ENCODE measurements at regions of chr19 and their contacts with region 1.

Region 1: DNA sequence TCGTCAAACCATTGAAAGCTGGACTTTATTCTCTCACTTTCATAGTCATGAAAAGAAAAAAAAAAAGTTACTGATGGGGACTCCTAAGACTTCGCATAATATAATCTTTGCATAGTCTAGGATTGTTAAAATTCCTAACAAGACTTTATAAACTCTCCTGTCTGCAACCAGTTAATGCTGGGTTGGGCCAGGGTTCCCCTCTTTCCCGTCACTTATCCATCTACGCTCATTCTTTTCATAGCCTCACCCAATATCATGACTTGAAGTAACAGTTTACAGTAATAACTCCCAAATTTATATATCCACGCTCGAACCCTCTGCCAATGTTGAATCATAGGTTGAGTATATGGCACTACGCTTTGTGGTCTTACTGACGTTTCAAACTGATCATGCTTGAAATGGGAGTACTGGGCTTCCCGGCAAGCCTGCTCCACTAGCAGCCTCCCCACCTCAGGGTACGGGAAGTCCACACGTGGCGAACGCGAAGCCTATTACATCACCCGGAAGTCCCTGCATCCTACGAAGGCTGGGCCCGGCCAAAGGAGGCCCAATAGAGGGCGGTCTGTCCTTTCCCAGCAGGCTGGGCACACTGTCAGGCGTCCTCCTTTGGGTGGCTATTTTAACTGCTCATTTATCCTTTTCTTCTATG is 743 bp upstream of the ZNF460 start:
- DNase-seq: peak; percentile 85 to 94 (median 88)
- H3K4me3 ChIP-seq: peak overlapping the region; percentile 80 to 87 (median 85)
- H3K4me3 Mint-ChIP-seq: no peak overlapping the region
- H3K27ac ChIP-seq: peak overlapping the region; percentile 95
- H3K27ac Mint-ChIP-seq: no peak overlapping the region
- H3K4me1 ChIP-seq: peaks cover 18 to 26% of the 10 kb centered on the region in 2 donors
- H3K4me1 Mint-ChIP-seq: peaks cover 18% of the 10 kb centered on the region
- H3K27me3 ChIP-seq: no peaks in the 10 kb centered on the region
- H3K27me3 Mint-ChIP-seq: peaks cover 0 to 3% (median 0%) of the 10 kb centered on the region in 3 donors
- CTCF ChIP-seq: no peak

Region 2: GRCh38 chr19:57240311-57241090 is 39.0 kb before region 1 on chr19 and contains the start of gene ZNF805:
- intact Hi-C with region 1: loop called (anchors 1 to 5 kb)
- DNase-seq: peak; percentile 84 to 90 (median 86)
- H3K4me3 ChIP-seq: peak within 1 kb of the TSS; percentile 78 to 94 (median 81)
- H3K4me3 Mint-ChIP-seq: peak within 1 kb of the TSS; percentile 88 to 94
- H3K27ac ChIP-seq: peak within 1 kb of the TSS; percentile 72 to 92
- H3K27ac Mint-ChIP-seq: peak within 1 kb of the TSS; percentile 86 to 96 (median 93)
- H3K4me1 ChIP-seq: peaks cover 17 to 23% of the 10 kb centered on the region in 2 donors
- H3K4me1 Mint-ChIP-seq: peaks cover 21% of the 10 kb centered on the region
- H3K27me3 ChIP-seq: no peaks in the 10 kb centered on the region
- H3K27me3 Mint-ChIP-seq: peaks cover 0 to 2% (median 2%) of the 10 kb centered on the region in 3 donors
- CTCF ChIP-seq: no peak
- polyA plus RNA-seq, gene ZNF805: 1.3 to 3.4 (median 3.3) TPM

Region 3: GRCh38 chr19:57319869-57320179 is 40.3 kb after region 1 on chr19:
- intact Hi-C with region 1: loop called in 1 of 2 experiments (anchors 5 kb)
- DNase-seq: no peak
- H3K4me3 ChIP-seq: peak overlapping the region; percentile 69 to 83 (median 72)
- H3K4me3 Mint-ChIP-seq: peak overlapping the region; percentile 88 to 97
- H3K27ac ChIP-seq: peak overlapping the region; percentile 88 to 92
- H3K27ac Mint-ChIP-seq: peak overlapping the region; percentile 92 to 99 (median 94)
- H3K4me1 ChIP-seq: peaks cover 15 to 16% of the 10 kb centered on the region in 2 donors
- H3K4me1 Mint-ChIP-seq: peaks cover 24% of the 10 kb centered on the region
- H3K27me3 ChIP-seq: peaks cover 22 to 40% of the 10 kb centered on the region in 2 donors
- H3K27me3 Mint-ChIP-seq: peaks cover 29 to 40% (median 34%) of the 10 kb centered on the region in 3 donors
- CTCF ChIP-seq: no peak

Measured in CD14-positive monocyte (primary cell).